ENCODE measurements at regions of chr2 and their contacts with region 1.

Region 1: DNA sequence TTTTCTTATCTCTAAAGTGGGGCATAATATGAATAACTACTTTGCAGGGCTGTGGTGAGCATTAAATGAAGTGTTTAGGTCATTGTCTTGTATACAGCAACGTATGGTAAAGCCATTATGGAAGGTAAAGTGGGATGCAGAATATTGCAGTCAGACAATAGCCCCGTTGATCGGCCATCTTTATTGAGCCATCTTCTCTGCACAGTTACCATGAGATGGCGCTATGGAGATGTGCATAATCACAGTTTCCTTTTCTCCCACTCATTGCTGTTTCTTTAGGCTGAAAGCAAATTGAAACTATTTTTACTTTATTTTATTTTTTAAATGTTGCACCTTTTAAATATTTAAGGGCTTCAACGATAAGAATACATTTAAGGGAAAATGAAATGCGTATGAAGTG is 108.9 kb downstream of the THSD7B start:
- DNase-seq: peak; percentile 12
- H3K4me3 Mint-ChIP-seq: no peak overlapping the region
- H3K27ac Mint-ChIP-seq: no peak overlapping the region
- H3K4me1 Mint-ChIP-seq: no peaks in the 10 kb centered on the region
- H3K27me3 Mint-ChIP-seq: no peaks in the 10 kb centered on the region
- CTCF ChIP-seq: no peak

Region 2: DNA sequence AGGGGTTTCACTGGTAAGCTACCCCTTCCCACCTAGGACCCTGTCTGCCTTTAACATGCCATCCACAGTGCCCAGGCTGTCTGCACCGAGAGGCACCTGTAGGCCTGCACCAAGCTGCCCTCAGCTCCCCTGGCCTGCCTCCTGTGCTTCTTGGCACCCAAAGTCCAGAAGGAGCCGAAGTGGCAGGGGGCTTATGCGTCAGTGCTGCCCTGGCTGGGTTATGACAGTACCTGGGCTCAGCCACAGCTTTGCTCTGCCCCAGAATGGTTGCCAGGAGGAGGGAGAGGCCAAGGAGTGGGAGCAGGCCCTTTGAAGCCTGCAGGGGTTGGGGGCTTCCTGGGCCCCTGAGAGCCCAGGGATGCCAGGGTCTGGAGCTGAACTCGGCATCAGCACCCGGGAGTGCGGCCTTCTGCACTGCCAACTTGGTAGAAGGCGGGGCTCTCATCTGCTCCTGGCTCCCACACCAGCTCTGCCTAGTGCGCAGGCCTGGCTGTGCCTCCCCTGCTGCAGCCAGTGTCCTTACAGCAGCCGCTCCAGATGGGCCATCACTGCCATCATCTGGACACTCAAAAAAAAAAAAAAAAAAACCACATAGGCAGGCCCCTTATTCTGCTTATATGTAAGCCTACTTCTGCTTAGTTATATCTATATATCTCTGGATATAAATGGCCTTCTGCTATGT is 46.5 kb after region 1 on chr2:
- CTCF ChIA-PET with region 1: no interaction called
- intact Hi-C with region 1: no loop called
- DNase-seq: no peak
- H3K4me3 Mint-ChIP-seq: no peak overlapping the region
- H3K27ac Mint-ChIP-seq: no peak overlapping the region
- H3K4me1 Mint-ChIP-seq: no peaks in the 10 kb centered on the region
- H3K27me3 Mint-ChIP-seq: no peaks in the 10 kb centered on the region
- CTCF ChIP-seq: no peak

Region 3: DNA sequence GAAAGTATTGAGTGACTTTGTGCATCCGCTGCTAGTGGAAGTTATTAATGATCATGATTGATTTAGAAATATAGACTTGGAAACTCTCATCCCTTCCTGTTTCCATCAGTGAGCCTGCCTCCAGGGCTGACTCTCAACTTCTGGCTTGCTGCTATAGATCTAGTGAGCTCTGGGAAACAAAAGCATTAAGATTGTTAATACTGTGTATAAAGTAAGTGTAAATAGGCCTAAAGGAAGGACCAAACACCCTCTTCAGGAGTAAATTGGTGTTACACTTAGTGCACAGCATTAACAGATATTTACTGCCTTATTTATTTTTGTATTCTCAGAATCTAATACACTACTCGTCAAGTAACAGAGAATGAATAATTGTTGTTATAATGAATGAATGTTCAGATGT is 176.7 kb after region 1 on chr2:
- CTCF ChIA-PET with region 1: no interaction called
- intact Hi-C with region 1: loop called (anchors 1 kb)
- DNase-seq: no peak
- H3K4me3 Mint-ChIP-seq: no peak overlapping the region
- H3K27ac Mint-ChIP-seq: no peak overlapping the region
- H3K4me1 Mint-ChIP-seq: no peaks in the 10 kb centered on the region
- H3K27me3 Mint-ChIP-seq: no peaks in the 10 kb centered on the region
- CTCF ChIP-seq: no peak

Region 4: GRCh38 chr2:137659612-137660011 is 785.4 kb after region 1 on chr2:
- CTCF ChIA-PET with region 1: no interaction called
- intact Hi-C with region 1: loop called (anchors 5 kb)
- DNase-seq: peak; percentile 46
- H3K4me3 Mint-ChIP-seq: no peak overlapping the region
- H3K27ac Mint-ChIP-seq: no peak overlapping the region
- H3K4me1 Mint-ChIP-seq: no peaks in the 10 kb centered on the region
- H3K27me3 Mint-ChIP-seq: no peaks in the 10 kb centered on the region
- CTCF ChIP-seq: no peak

Measured in Calu3 (cell line).